CD4-positive, alpha-beta memory T cell (primary cell): ENCODE measurements at regions of chr14 and their contacts with region 1.

Region 1: DNA sequence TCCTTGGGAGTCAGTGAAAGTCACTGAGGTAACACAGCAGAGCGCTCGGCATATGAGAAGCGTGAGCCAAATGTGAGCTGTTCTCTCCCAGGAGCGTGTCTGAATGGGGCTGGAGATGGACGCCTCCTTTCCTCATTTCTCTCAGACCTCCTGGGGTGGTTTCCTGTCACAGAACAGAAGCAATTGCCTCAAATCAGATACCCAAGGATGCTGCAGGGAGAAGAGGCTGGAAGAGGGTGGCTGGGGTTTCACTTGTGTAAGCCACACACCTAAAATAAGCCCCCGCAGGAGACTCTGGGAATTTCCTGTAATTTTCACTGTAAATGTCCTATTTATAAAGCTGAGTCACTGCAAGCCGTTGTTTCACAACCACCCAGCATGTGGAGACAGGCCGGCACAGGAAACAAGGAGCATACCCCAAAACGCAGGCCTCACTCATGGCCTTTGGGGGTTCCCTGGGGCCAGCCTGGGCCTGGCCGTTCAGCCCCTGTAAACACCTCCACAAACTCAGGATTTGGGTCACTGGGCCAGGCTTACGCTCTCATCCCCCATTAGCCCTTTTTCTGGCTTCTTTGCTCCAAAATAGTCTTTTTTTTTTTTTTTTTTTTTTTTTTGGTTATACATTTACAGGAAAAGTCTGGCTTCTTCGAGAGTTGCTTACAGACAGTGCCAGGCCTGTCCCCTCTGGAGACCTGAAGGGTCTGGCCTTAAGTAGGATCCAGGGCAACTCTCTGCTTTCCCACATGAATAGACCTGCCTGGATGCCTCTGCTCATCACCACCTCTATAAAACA is 55.3 kb downstream of the VCPKMT start:
- DNase-seq: peak in 3 of 5 donors; percentile 15 to 76 (median 22)
- H3K4me3 ChIP-seq: peak overlapping the region in 1 of 2 donors; percentile 62
- H3K4me3 Mint-ChIP-seq: peak overlapping the region in 7 of 8 donors; percentile 87 to 98 (median 94)
- H3K27ac ChIP-seq: peak overlapping the region; percentile 83
- H3K27ac Mint-ChIP-seq: peak overlapping the region; percentile 92 to 100 (median 99)
- H3K4me1 ChIP-seq: peaks cover 82% of the 10 kb centered on the region
- H3K4me1 Mint-ChIP-seq: peaks cover 59 to 95% (median 78%) of the 10 kb centered on the region in 4 donors
- H3K27me3 ChIP-seq: no peaks in the 10 kb centered on the region
- H3K27me3 Mint-ChIP-seq: no peaks in the 10 kb centered on the region

Region 2: DNA sequence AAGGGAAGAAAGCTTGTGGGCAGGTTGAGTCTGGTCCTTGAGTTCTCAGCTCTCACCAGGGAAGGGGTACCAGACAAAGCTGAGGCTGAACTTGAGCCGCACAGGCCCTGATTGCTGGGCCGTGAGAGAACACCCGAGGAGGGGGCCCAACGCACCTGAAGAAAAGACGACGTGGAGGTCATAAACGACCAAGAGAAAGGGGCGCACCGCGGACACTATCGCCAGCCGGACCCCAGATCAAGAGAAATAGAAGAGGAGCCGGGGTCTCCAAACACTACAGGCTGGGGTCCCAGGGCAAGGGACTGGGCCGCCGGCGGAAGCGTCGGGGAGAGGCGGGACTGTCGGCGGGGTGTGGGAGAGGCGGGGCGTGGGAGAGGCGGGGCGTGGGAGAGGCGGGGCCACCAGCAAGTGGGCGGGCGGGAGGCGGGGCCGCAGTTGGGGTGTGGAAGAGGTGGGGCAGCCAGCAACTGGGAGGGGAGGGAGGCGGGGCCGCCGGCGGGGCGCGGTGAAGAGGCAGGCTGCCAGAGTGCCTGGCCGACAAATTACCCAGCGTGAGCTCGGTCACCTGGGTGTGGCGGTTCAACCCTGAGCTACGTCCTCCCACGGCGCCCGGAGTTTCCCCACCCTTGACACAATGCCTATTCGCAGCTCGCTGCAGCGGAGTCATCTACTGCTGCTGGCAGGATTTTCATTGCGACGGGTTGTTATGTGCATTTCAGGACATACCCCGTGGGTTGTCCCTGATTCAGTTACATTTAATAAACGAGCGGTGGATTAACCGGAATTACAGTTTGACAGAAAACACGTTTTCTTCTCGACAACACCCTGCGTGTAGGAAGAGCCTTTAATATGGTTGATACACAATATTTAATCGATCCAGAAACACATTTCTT is 193.0 kb before region 1 on chr14:
- CTCF ChIA-PET with region 1: interaction called, 182 read pairs
- POLR2A ChIA-PET with region 1: interaction called, 209 read pairs
- intact Hi-C with region 1: loop called (anchors 1 kb)
- DNase-seq: peak; percentile 92 to 98 (median 96)
- H3K4me3 ChIP-seq: peak overlapping the region; percentile 47 to 54
- H3K4me3 Mint-ChIP-seq: peak overlapping the region; percentile 88 to 96 (median 92)
- H3K27ac ChIP-seq: peak overlapping the region; percentile 92
- H3K27ac Mint-ChIP-seq: peak overlapping the region; percentile 88 to 99 (median 98)
- H3K4me1 ChIP-seq: peaks cover 45% of the 10 kb centered on the region
- H3K4me1 Mint-ChIP-seq: peaks cover 12 to 21% (median 14%) of the 10 kb centered on the region in 4 donors
- H3K27me3 ChIP-seq: no peaks in the 10 kb centered on the region
- H3K27me3 Mint-ChIP-seq: no peaks in the 10 kb centered on the region

Region 3: DNA sequence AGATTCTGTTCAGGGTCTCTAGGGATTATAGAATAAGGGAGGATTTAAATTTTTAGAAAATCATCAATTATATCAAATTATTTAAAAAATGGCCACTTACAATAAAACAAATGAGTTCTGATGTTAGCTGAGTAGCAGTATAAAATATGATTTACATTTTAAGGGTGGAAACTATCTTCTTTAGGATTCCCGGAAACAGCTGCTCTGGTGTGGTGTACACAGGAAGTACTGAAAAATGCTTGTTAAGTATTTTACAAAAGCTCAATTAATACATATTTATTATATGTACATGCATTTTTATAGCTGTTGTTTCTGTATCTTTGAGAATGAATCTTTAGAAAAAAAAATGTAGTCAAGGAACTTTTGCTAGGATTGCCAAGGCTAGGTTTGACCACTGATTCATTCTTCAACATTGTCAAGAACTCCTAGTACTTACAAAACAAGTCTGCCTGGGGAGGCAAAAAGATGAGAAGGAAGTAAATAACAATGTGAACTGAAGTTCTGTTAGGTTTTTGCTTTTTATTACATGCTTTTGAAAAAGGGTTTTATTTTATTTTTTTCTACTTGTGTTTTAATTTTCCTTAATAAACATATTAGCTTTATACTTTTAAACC is 120.2 kb before region 1 on chr14:
- CTCF ChIA-PET with region 1: interaction called, 8 read pairs
- POLR2A ChIA-PET with region 1: interaction called, 30 read pairs
- intact Hi-C with region 1: loop called (anchors 1 kb)
- DNase-seq: peak in 4 of 5 donors; percentile 40 to 56 (median 48)
- H3K4me3 ChIP-seq: peak overlapping the region in 1 of 2 donors; percentile 15
- H3K4me3 Mint-ChIP-seq: peak overlapping the region; percentile 60 to 86 (median 68)
- H3K27ac ChIP-seq: peak overlapping the region; percentile 23
- H3K27ac Mint-ChIP-seq: peak overlapping the region; percentile 31 to 93 (median 88)
- H3K4me1 ChIP-seq: peaks cover 52% of the 10 kb centered on the region
- H3K4me1 Mint-ChIP-seq: peaks cover 44 to 72% (median 61%) of the 10 kb centered on the region in 4 donors
- H3K27me3 ChIP-seq: no peaks in the 10 kb centered on the region
- H3K27me3 Mint-ChIP-seq: no peaks in the 10 kb centered on the region

Region 4: DNA sequence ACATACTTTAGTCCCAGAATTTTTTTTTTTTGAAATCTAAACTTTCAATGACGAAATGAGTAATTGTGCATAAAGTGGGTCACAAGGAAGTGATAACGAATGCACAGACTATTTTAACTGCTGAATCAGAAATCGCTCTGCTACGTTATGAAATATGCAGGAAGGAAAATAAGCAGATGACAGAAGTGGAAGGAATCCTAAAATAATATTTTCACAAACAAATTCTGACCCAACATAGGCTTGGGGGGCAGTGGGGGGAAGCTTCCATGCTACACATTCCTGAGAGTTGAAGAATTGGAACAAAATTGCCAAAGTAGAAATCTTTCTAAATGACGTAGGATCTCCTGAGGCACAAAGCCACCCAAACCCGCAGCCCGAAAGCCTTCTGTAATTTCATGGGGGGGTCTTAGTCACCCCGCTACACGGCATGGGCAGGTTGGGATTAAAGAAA is 78.5 kb before region 1 on chr14:
- CTCF ChIA-PET with region 1: interaction called, 4 read pairs
- POLR2A ChIA-PET with region 1: interaction called, 21 read pairs
- intact Hi-C with region 1: no loop called
- DNase-seq: peak; percentile 48 to 77 (median 64)
- H3K4me3 ChIP-seq: no peak overlapping the region
- H3K4me3 Mint-ChIP-seq: peak overlapping the region; percentile 71 to 89 (median 79)
- H3K27ac ChIP-seq: peak overlapping the region; percentile 64
- H3K27ac Mint-ChIP-seq: peak overlapping the region; percentile 89 to 98 (median 95)
- H3K4me1 ChIP-seq: peaks cover 92% of the 10 kb centered on the region
- H3K4me1 Mint-ChIP-seq: peaks cover 51 to 83% (median 70%) of the 10 kb centered on the region in 4 donors
- H3K27me3 ChIP-seq: no peaks in the 10 kb centered on the region
- H3K27me3 Mint-ChIP-seq: no peaks in the 10 kb centered on the region

Region 5: GRCh38 chr14:50045039-50045711 is 15.9 kb before region 1 on chr14:
- CTCF ChIA-PET with region 1: interaction called, 45 read pairs
- POLR2A ChIA-PET with region 1: interaction called, 194 read pairs
- intact Hi-C with region 1: loop called (anchors 1 kb)
- DNase-seq: peak; percentile 59 to 79 (median 71)
- H3K4me3 ChIP-seq: peak overlapping the region in 1 of 2 donors; percentile 12
- H3K4me3 Mint-ChIP-seq: peak overlapping the region; percentile 28 to 89 (median 66)
- H3K27ac ChIP-seq: peak overlapping the region; percentile 64
- H3K27ac Mint-ChIP-seq: peak overlapping the region; percentile 89 to 97 (median 94)
- H3K4me1 ChIP-seq: peaks cover 75% of the 10 kb centered on the region
- H3K4me1 Mint-ChIP-seq: peaks cover 56 to 85% (median 71%) of the 10 kb centered on the region in 4 donors
- H3K27me3 ChIP-seq: no peaks in the 10 kb centered on the region
- H3K27me3 Mint-ChIP-seq: no peaks in the 10 kb centered on the region

Region 6: DNA sequence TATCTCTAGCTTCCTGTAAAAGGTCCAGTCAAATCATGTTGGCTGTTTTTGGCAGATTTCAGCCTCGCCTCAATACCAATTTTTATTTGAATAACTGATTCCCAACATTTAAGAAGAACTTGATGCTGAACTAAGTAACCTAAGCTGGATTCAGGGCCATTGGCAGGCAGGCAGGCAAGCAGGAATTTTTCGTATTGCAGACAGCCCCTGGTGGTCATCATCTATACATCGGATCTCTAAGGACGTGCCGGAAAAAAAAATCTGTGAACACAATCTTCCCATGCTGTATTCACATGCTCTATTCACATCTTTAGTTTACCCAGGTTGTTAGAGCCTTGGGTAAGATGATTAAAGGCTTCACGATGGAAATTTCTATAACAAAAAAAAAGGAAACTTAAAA is 48.3 kb after region 1 on chr14:
- CTCF ChIA-PET with region 1: interaction called, 51 read pairs
- POLR2A ChIA-PET with region 1: interaction called, 58 read pairs
- intact Hi-C with region 1: loop called (anchors 1 kb)
- DNase-seq: no peak
- H3K4me3 ChIP-seq: no peak overlapping the region
- H3K4me3 Mint-ChIP-seq: no peak overlapping the region
- H3K27ac ChIP-seq: no peak overlapping the region
- H3K27ac Mint-ChIP-seq: peak overlapping the region in 5 of 7 donors; percentile 19 to 56 (median 37)
- H3K4me1 ChIP-seq: peaks cover 15% of the 10 kb centered on the region
- H3K4me1 Mint-ChIP-seq: peaks cover 6 to 25% (median 14%) of the 10 kb centered on the region in 4 donors
- H3K27me3 ChIP-seq: no peaks in the 10 kb centered on the region
- H3K27me3 Mint-ChIP-seq: no peaks in the 10 kb centered on the region